Activated naive CD4-positive, alpha-beta T cell treated with anti-CD3 and anti-CD28 coated beads, Interleukin-2, amount 10 ng/mL, durations not matched to agents 7 days and 5 days (primary cell): ENCODE measurements at regions of chr10 and their contacts with region 1.

Region 1: GRCh38 chr10:73940634-73941221 is 29.8 kb downstream of the PLAU start:
- DNase-seq: peak; percentile 89
- H3K4me3 Mint-ChIP-seq: no peak overlapping the region
- H3K27ac Mint-ChIP-seq: peak overlapping the region; percentile 50
- H3K4me1 Mint-ChIP-seq: peaks cover 23% of the 10 kb centered on the region
- H3K27me3 Mint-ChIP-seq: peaks cover 53% of the 10 kb centered on the region

Region 2: GRCh38 chr10:73848821-73849489 is 91.8 kb before region 1 on chr10:
- CTCF ChIA-PET with region 1: interaction called, 25 read pairs
- DNase-seq: peak; percentile 95
- H3K4me3 Mint-ChIP-seq: no peak overlapping the region
- H3K27ac Mint-ChIP-seq: peak overlapping the region; percentile 80
- H3K4me1 Mint-ChIP-seq: peaks cover 21% of the 10 kb centered on the region
- H3K27me3 Mint-ChIP-seq: no peaks in the 10 kb centered on the region

Region 3: DNA sequence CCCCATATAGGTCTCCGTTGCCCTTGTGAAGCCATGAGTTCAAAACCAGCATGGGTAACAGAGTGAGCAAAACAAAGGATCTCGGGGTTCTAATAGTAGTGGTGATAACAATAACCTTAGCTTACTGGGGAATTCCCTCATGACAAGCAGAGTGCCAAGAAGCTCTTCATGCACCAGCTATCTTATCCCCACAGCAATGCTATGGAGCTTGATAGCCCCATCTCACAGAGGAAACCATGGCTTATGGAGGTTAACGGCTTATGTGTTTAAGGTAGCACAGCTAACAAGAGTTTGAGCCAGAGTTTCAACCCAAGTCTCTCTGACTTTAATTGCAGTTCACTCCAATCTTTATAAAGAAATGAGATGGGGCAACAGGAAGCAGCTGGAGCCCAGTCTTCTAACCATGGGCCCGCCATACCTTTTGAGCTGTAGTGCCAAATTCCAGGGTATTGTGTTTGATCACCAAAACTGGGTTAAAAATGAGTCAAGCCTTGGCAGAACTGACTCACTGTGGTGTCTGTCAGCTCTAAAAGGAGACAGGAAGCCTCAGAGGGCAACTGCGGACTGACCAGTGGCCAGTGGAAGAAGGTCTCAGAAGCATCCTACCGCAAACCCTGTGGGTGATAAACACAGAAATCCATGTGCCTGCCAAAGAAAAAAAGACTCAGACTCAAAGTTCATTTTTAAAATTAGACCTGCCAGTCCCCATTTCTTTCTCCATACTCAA is 46.3 kb before region 1 on chr10:
- CTCF ChIA-PET with region 1: interaction called, 511 read pairs
- DNase-seq: no peak
- H3K4me3 Mint-ChIP-seq: no peak overlapping the region
- H3K27ac Mint-ChIP-seq: no peak overlapping the region
- H3K4me1 Mint-ChIP-seq: no peaks in the 10 kb centered on the region
- H3K27me3 Mint-ChIP-seq: peaks cover 40% of the 10 kb centered on the region

Region 4: DNA sequence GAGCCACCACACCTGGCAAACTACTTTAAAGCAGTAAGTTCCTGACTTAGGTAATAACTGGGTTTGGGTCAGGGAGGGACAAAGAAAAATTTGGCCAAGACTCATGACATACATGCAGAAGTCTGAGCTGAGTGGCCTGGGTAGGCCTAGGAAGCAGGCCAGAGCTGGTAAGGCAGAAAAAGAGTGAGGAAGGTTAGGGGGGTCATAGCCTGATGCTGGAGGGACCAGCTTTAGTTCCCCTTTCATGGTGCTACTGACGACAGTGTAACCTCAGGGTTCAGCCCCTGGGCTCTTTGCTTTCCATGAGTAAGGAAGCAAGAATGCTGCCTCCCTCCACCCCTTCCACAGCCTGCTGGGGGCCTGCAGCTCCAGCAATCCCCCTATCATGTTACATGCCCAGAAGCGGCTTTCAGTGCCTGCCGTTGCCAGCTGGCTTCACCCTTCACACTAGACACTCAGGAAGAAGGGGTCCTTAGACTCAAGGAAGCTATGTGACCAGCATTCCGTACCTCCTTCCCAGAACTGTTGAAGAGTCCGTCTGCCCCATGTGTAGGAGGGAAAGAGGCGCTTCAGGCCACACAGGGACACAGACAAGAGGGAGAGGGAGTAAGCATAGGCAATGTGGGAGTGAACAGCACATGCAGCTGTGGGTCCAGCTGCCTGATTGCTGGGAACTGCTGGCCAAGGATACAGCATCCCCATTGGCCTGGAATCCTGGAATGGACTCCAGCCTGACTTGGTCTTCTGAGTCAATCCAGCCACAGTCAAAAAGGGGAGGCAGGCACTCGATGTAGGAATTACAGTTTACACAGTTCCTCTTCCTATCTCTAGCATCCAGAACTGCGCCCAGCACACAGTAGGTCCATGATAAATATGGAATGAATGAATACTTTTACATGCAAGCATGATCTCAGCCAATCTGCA is 33.9 kb before region 1 on chr10:
- CTCF ChIA-PET with region 1: interaction called, 15 read pairs
- DNase-seq: no peak
- H3K4me3 Mint-ChIP-seq: no peak overlapping the region
- H3K27ac Mint-ChIP-seq: no peak overlapping the region
- H3K4me1 Mint-ChIP-seq: peaks cover 43% of the 10 kb centered on the region
- H3K27me3 Mint-ChIP-seq: peaks cover 85% of the 10 kb centered on the region

Region 5: GRCh38 chr10:73956476-73957359 is 16.0 kb after region 1 on chr10:
- CTCF ChIA-PET with region 1: interaction called, 17 read pairs
- DNase-seq: peak; percentile 57
- H3K4me3 Mint-ChIP-seq: peak overlapping the region; percentile 61
- H3K27ac Mint-ChIP-seq: peak overlapping the region; percentile 98
- H3K4me1 Mint-ChIP-seq: peaks cover 65% of the 10 kb centered on the region
- H3K27me3 Mint-ChIP-seq: no peaks in the 10 kb centered on the region

Region 6: GRCh38 chr10:74047868-74048267 is 107.1 kb after region 1 on chr10:
- CTCF ChIA-PET with region 1: no interaction called
- DNase-seq: no peak
- H3K4me3 Mint-ChIP-seq: no peak overlapping the region
- H3K27ac Mint-ChIP-seq: no peak overlapping the region
- H3K4me1 Mint-ChIP-seq: no peaks in the 10 kb centered on the region
- H3K27me3 Mint-ChIP-seq: no peaks in the 10 kb centered on the region

Region 7: DNA sequence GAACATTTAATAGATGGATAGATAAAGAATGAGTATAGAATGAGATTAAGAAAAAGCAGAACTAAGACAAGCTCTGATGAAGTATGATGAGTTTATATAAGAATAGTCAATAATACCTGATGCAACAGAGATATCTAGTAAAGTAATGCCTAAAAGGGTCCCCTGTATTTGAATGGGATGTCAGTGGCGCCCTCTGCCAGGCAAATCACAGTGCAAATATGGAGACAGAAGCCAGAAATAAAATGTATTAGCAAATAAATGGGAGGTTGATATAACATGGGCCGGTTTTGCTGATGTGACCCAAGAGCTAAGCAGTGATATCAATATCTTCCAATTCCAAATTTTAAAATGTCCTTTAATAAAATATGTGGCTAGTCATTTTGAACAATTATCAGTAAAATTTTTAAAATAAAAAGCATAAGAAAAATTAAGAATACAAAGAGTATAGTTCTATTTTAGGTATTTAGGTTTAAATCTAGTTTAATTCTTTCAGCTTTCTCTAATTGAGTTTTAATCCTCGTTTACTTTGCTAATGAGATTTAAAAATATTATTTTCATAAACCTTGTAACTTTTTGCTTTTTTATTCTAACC is 272.9 kb after region 1 on chr10:
- CTCF ChIA-PET with region 1: no interaction called
- DNase-seq: peak; percentile 65
- H3K4me3 Mint-ChIP-seq: no peak overlapping the region
- H3K27ac Mint-ChIP-seq: no peak overlapping the region
- H3K4me1 Mint-ChIP-seq: peaks cover 3% of the 10 kb centered on the region
- H3K27me3 Mint-ChIP-seq: no peaks in the 10 kb centered on the region